ENCODE measurements at regions of chr17 and their contacts with region 1.

Region 1: GRCh38 chr17:45135192-45135977 is at the start of gene ACBD4:
- DNase-seq: peak; percentile 86
- H3K4me3 ChIP-seq: peak within 1 kb of the TSS; percentile 75
- CTCF ChIP-seq: peak; percentile 100

Region 2: DNA sequence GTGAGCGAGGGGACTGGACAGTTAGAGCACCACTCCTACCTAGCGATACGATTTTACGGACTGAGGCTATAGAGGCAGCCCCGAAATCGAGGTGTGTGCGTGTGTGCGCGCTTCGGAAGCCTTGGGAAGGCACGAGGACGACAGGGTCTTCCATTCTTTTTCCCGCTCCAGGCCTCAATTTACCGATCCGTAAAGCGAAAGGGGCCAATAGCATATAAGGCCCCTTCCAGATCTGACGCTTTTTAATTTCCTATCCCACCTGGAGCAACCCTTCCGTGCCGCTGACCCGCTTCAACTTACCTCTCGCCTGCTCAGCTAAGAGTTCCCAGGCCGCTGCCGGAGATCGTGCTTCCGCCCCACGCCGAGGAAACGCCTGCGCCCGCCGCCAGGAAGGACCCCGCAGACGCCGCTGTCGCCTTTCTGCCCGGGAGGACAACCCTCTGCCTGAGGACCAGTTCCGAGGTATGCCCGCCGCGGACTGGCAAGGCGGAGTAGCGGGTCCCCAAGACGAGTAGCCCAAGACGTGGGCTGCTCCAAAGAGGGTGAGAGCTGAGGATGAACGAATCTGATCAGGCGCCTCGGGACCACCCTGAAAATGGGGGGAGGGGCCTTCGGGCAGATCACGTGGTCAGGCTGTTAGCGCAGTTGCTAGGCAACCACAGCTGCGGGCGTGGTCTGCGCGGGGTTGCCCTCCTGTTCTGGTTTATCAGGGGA is 236.2 kb before region 1 on chr17 and contains the start of gene EFTUD2:
- CTCF ChIA-PET with region 1: interaction called, 37 read pairs
- POLR2A ChIA-PET with region 1: no interaction called
- DNase-seq: no peak
- H3K4me3 ChIP-seq: peak within 1 kb of the TSS; percentile 100
- CTCF ChIP-seq: no peak

Region 3: GRCh38 chr17:45051060-45051719 is 84.2 kb before region 1 on chr17 and contains the start of gene DCAKD:
- CTCF ChIA-PET with region 1: interaction called, 16 read pairs
- POLR2A ChIA-PET with region 1: no interaction called
- DNase-seq: peak; percentile 65
- H3K4me3 ChIP-seq: peak within 1 kb of the TSS; percentile 66
- CTCF ChIP-seq: peak; percentile 11

Region 4: DNA sequence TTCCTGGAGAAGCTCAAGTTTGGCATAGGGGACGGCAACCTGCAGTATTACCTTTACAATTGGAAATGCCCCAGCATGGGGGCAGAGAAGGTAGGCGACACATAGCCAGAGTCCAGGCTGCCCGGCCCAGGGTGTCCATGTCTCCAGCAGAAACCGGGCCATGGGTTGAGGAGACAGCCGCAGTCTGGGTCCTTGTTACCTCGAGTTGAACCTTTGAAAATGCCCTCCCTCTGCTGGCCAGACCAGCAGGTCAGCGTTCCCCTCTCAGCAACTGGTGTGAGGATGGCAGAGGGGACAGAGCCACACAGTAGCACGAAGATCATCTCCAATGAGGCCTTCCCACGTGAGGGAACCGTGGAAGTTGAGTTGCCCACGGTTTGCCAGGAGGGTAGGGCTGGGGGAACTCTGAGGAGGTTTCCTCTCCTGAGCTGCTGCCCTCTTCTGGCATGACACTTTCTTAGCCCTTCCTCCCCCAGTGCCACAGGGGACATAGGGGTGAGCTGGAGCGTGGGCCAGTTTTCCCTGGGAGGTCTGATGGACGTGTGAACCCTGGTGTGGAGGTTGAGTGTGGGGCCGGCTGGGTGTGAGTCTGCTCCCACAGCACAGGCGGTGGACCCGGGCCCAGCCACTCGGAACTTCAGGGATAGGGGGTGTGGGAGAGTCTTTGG is 30.3 kb before region 1 on chr17:
- CTCF ChIA-PET with region 1: interaction called, 28 read pairs
- POLR2A ChIA-PET with region 1: interaction called, 3 read pairs
- DNase-seq: no peak
- H3K4me3 ChIP-seq: no peak overlapping the region
- CTCF ChIP-seq: no peak

Region 5: GRCh38 chr17:45148183-45149036 is 13.0 kb after region 1 on chr17 and contains the start of gene HEXIM1:
- CTCF ChIA-PET with region 1: interaction called, 236 read pairs
- POLR2A ChIA-PET with region 1: interaction called, 56 read pairs
- DNase-seq: peak; percentile 97
- H3K4me3 ChIP-seq: peak within 1 kb of the TSS; percentile 98
- CTCF ChIP-seq: no peak

Region 6: DNA sequence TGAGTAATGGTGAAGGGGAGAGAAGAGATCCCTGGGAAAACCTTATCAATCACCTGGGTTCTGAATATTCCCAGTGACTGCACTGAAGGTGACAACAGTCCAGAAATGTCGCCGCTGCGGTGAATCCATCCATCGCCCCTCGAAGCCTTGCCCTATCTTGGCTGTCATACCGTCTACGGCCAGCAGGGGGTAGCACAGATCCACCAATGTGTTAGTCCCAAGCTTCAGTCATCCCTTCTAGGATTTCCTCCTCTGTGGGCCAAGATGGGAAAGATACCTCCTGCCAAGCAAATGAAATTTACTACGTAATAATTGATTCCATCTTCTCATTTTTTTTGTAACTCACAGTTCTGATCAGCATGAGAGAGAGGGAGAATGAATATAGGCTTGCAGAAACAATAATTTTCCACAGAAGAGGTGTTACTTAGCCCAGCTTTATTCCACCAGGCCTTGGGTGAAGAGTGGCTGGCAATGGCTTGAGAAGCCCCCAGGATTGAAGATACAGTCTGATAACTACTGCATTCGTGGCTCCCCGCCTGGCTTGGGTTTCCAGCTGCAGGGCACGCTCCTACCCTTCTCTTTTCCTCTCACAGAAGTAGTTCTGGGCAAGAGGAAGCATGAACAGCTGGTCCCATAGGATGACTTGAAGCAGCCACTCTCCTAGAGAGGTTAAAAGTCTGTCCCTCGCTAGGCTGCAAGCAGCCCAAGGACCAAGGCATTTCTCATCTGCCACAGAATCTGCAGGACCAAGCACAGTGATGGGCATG is 83.7 kb after region 1 on chr17:
- CTCF ChIA-PET with region 1: interaction called, 63 read pairs
- POLR2A ChIA-PET with region 1: no interaction called
- DNase-seq: peak; percentile 37
- H3K4me3 ChIP-seq: peak overlapping the region; percentile 30
- CTCF ChIP-seq: peak; percentile 86

Region 7: DNA sequence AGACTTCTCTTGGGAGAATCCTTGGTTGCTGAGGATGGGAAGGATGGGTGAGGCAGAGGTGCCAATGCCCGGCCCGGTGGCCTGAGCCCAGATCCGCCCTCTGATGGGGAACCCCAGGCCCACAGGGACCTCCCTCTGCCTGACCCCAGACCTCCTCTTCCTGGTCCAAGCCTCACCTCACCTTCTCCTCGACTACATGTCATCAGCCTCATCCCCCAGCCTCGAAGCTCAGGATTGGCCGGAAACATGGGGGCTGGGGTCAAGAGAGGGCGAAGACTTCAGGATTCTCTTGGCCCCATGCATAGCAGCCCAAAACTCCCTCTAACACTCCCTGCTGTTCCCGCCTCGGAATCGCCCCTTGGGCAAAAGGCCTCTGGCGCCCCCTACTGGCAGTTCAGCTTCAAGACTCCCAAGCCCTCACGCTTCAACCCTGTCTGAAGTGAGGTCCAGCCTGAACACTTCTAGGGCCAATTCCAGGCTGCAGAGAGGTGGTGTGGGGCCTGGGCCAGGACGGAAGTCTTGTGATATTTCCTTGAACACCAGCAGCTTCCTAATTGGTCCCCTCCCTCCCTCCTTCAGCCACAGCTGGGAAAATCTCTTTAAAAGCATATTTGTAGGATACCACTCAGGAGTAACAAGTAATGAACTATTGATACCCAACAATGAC is 250.1 kb after region 1 on chr17:
- CTCF ChIA-PET with region 1: interaction called, 12 read pairs
- POLR2A ChIA-PET with region 1: no interaction called
- DNase-seq: no peak
- H3K4me3 ChIP-seq: no peak overlapping the region
- CTCF ChIP-seq: peak; percentile 96

Region 8: GRCh38 chr17:45677770-45678169 is 542.4 kb after region 1 on chr17:
- CTCF ChIA-PET with region 1: no interaction called
- POLR2A ChIA-PET with region 1: no interaction called
- DNase-seq: no peak
- H3K4me3 ChIP-seq: no peak overlapping the region
- CTCF ChIP-seq: no peak

Measured in AG04449 (cell line).